Activated CD4-positive, alpha-beta T cell treated with anti-CD3 and anti-CD28 coated beads for 36 hours (primary cell): ENCODE measurements at regions of chr1 and their contacts with region 1.

Region 1: GRCh38 chr1:199948587-199949280 is 78.8 kb upstream of the NR5A2 start:
- DNase-seq: no peak
- ATAC-seq: peak; percentile 44
- H3K4me3 Mint-ChIP-seq: no peak overlapping the region
- H3K27ac Mint-ChIP-seq: no peak overlapping the region
- H3K4me1 Mint-ChIP-seq: no peaks in the 10 kb centered on the region
- H3K27me3 Mint-ChIP-seq: peaks cover 40% of the 10 kb centered on the region

Region 2: DNA sequence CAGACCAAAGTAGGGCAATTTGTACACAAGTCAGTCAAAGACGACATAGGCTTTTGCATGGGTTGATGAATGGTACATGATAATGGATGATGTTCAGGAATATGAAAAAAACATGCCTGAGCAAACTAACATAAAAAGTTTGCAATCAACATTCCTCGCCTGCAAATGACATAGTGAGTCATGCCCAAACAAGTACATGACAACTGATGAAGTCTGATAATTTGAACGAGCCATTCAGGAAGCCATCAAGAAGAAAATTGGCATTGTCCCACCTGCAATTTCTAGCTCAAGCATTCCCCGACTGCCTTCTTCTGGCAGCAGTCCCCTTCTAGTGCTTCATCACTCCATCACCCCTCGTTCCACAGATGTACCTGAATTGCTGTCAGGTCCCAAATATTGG is 39.6 kb before region 1 on chr1:
- CTCF ChIA-PET with region 1: no interaction called
- POLR2A ChIA-PET with region 1: no interaction called
- intact Hi-C with region 1: no loop called
- DNase-seq: no peak
- ATAC-seq: no peak
- H3K4me3 Mint-ChIP-seq: no peak overlapping the region
- H3K27ac Mint-ChIP-seq: no peak overlapping the region
- H3K4me1 Mint-ChIP-seq: no peaks in the 10 kb centered on the region
- H3K27me3 Mint-ChIP-seq: peaks cover 6% of the 10 kb centered on the region

Region 3: DNA sequence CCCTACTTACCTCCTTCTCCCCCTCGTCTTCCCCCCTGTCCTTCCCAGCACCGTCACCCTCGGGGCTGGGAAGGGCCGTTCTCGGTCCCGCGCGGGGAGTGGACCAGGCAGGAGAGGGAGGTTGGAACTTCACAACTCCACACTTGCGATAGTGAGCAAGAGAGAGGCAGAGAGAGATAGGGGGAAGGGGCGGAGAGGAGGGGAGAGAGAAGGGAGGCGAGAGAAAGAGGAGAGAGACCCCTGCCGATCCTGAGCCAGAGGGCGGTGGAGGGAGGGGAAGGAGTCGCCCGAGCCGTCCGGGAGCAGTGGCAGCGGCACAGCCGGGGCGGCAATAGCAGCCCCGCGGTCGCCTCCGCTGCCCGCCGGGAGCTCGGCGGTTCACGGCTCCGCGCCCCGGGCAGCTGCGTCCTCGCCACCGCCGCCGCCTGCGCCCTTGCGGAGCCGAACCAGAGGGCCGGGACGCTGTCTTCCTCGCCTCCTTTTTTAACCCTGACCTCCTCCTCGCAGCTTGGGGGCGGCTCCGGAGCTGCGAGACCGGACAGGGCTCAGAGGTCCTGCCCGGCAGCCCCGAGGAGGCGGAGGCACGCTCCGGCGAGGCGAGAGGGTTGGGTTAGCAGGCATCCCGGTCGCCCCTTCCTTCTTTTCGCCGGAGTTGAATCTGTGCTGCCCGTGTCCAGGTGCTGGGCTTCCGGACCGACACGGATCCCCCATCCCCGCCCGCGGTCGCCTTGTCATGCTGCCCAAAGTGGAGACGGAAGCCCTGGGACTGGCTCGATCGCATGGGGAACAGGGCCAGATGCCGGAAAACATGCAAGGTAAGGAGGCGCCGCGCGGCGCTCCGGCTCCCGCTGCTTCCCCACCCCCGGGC is 90.5 kb after region 1 on chr1:
- CTCF ChIA-PET with region 1: no interaction called
- POLR2A ChIA-PET with region 1: no interaction called
- intact Hi-C with region 1: loop called (anchors 2 to 5 kb)
- DNase-seq: peak; percentile 50
- ATAC-seq: peak; percentile 62
- H3K4me3 Mint-ChIP-seq: peak overlapping the region; percentile 61
- H3K27ac Mint-ChIP-seq: no peak overlapping the region
- H3K4me1 Mint-ChIP-seq: peaks cover 35% of the 10 kb centered on the region
- H3K27me3 Mint-ChIP-seq: peaks cover 64% of the 10 kb centered on the region

Region 4: DNA sequence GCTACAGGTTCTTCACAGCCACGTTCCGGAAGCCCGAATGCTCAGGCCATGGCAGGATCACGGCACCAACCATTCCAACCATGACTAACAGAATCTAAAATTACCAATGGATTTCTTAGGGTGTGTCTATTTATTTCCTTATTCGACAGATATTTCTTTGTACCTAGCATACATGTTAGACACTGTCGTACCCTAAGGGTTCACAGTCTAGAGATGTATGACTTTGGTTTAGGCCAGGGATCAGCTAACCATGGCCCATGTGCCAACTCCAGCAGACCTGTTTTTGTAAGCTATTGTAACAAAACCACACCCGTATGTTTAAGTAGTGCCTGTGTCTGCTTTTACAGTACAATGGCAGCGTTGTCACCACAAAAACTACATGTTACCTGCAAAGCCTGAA is 245.7 kb after region 1 on chr1:
- CTCF ChIA-PET with region 1: no interaction called
- POLR2A ChIA-PET with region 1: no interaction called
- intact Hi-C with region 1: no loop called
- DNase-seq: no peak
- ATAC-seq: no peak
- H3K4me3 Mint-ChIP-seq: no peak overlapping the region
- H3K27ac Mint-ChIP-seq: no peak overlapping the region
- H3K4me1 Mint-ChIP-seq: no peaks in the 10 kb centered on the region
- H3K27me3 Mint-ChIP-seq: no peaks in the 10 kb centered on the region

Region 5: DNA sequence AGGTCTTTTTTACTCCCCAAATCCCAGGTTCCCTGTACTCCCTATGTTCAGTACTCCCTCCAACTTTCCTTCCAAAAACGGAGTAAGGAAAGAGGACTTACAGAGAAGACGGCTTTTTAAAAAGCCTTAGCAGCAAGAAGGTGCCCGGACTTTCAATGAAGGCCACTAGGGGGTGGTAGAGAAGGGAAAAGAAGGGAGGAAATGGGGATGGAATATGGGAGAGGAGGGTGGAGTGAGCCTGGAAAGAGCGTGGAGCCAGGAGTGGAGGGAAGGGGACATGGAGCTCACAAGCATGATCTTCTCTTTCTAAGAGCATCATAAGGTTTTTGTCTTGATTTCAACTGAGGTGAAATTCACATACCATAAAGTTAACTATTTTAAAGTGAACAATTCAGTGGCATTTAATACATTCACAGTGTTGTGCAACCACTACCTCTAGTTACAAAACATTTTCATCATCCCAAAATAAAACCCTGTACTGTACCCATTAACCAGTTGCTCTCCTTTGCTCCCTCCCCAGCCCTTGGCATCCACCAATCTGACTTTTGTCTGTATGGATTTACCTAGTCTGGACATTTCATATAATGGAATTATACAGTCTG is 331.2 kb after region 1 on chr1:
- CTCF ChIA-PET with region 1: no interaction called
- POLR2A ChIA-PET with region 1: no interaction called
- intact Hi-C with region 1: loop called in 1 of 2 experiments (anchors 10 kb)
- DNase-seq: peak; percentile 51
- ATAC-seq: no peak
- H3K4me3 Mint-ChIP-seq: no peak overlapping the region
- H3K27ac Mint-ChIP-seq: no peak overlapping the region
- H3K4me1 Mint-ChIP-seq: no peaks in the 10 kb centered on the region
- H3K27me3 Mint-ChIP-seq: no peaks in the 10 kb centered on the region

Region 6: GRCh38 chr1:200448034-200448762 is 499.5 kb after region 1 on chr1:
- CTCF ChIA-PET with region 1: no interaction called
- POLR2A ChIA-PET with region 1: no interaction called
- intact Hi-C with region 1: loop called in 1 of 2 experiments (anchors 5 kb)
- DNase-seq: peak; percentile 15
- ATAC-seq: peak; percentile 75
- H3K4me3 Mint-ChIP-seq: no peak overlapping the region
- H3K27ac Mint-ChIP-seq: peak overlapping the region; percentile 92
- H3K4me1 Mint-ChIP-seq: peaks cover 44% of the 10 kb centered on the region
- H3K27me3 Mint-ChIP-seq: peaks cover 7% of the 10 kb centered on the region

Region 7: DNA sequence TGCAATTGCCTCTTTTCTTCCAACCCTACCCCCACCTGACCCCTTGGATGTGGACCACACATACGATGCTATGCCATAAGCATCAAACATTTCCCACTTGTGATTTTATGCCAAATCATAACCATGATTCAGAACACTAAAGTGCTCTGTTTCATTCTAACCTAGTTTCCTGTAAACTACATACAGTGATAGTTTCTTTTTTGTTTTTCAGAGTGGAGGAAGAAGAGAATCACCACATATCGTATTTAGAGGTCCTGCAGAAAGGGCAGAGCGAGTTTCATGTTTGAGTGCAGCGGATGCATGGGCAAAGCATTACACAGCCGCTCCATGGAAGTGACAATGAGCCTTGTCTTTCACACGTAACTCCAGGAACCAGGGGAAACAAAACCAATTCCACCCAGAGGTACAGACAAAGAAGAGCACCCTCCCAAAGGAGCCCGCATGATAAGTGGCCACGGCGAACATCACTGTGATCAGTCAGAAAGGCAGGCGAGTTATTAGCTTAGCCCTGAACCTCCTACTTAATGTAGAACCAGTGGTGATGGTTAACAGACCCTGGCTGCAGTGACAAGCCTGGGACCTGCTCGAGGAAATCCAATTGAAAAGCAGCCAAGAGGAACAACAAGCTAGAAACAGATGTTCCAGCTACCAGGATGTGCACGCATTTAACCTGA is 525.1 kb after region 1 on chr1:
- CTCF ChIA-PET with region 1: no interaction called
- POLR2A ChIA-PET with region 1: no interaction called
- intact Hi-C with region 1: loop called (anchors 5 to 10 kb)
- DNase-seq: peak; percentile 55
- ATAC-seq: peak; percentile 80
- H3K4me3 Mint-ChIP-seq: peak overlapping the region; percentile 32
- H3K27ac Mint-ChIP-seq: peak overlapping the region; percentile 48
- H3K4me1 Mint-ChIP-seq: peaks cover 47% of the 10 kb centered on the region
- H3K27me3 Mint-ChIP-seq: peaks cover 8% of the 10 kb centered on the region

Region 8: GRCh38 chr1:200890818-200891773 is 942.4 kb after region 1 on chr1:
- CTCF ChIA-PET with region 1: no interaction called
- POLR2A ChIA-PET with region 1: no interaction called
- intact Hi-C with region 1: loop called in 1 of 2 experiments (anchors 5 kb)
- DNase-seq: no peak
- ATAC-seq: no peak
- H3K4me3 Mint-ChIP-seq: peak overlapping the region; percentile 12
- H3K27ac Mint-ChIP-seq: no peak overlapping the region
- H3K4me1 Mint-ChIP-seq: peaks cover 46% of the 10 kb centered on the region
- H3K27me3 Mint-ChIP-seq: peaks cover 35% of the 10 kb centered on the region